Psoas muscle (tissue), 8 donors: ENCODE measurements at regions of chr5 and their contacts with region 1.

Region 1: DNA sequence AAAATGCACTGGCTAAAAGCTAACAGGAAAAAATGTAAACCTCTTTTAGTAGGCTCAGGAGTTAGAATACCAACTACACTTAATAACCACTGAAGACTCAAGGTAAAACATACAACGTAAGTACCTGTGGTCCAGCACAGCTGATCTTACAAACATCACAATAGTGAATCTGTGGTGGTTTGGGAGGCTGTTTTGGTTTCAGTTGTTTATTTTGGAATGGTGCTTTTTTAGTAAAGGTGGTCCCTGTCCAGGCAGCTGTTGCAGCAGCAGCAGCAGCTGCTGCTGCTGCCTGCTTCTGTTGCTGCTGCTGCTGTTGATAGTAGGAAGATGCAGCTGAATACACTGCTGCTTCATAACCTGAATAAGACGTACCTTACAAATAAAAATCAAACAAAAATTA is 37.9 kb downstream of the ZFR start:
- DNase-seq: no peak
- ATAC-seq: no peak
- H3K4me3 ChIP-seq: no peak overlapping the region
- H3K27ac ChIP-seq: no peak overlapping the region
- H3K4me1 ChIP-seq: no peaks in the 10 kb centered on the region
- H3K27me3 ChIP-seq: no peaks in the 10 kb centered on the region
- CTCF ChIP-seq: no peak

Region 2: DNA sequence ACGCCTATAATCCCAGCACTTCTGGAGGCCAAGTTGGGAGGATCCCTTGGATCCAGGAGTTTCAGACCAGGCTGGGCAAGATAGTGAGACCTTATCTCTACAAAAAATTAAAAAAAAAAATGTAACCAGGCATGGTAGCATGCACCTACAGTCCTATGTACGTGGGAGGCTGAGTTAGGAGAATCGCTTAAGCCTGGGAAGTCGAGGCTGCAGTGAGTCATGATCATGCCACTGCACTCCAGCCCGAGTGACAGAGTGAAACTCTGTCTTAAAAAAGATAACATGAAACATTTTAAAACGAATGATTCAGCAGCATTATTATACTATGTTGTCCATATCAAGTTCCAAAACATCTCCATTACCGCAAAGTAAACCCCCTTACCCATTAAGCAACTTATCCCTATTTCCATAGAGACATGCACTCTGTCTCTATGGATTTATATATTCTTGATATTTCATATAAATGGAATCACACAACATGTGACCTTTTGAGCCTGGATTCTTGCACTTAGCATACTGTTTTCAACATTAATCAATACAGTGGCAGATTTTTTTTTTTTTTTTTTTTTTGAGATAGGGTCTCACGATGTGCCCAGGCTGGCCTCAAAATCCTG is 37.0 kb before region 1 on chr5:
- intact Hi-C with region 1: no loop called
- DNase-seq: no peak
- ATAC-seq: no peak
- H3K4me3 ChIP-seq: no peak overlapping the region
- H3K27ac ChIP-seq: no peak overlapping the region
- H3K4me1 ChIP-seq: no peaks in the 10 kb centered on the region
- H3K27me3 ChIP-seq: no peaks in the 10 kb centered on the region
- CTCF ChIP-seq: no peak

Region 3: DNA sequence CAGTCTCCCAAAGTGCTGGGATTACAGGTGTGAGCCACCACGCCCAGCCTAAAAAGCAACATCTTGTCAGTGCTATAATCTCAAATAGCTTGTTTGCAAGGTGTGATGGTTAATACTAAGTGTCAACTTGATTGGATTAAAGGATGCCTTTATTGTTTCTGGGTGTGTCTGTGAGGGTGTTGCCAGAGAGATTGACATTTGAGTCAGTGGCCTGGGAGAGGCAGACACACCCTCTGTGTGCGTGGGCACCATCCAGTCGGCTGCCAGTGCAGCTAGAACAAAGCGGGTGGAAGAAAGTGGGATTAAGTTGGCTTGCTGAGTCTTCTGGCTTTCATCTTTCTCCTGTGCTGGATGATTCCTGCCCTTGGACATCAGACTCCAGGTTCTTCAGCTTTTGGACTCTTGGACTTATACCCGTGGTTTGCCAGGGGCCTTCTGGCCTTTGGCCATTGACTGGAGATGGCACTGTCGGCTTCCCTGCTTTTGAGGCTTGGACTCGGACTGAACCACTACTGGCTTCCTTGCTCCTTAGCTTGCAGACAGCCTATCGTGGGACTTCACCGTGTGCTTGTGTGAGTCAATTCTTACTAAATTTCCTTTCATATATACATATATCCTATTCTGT is 1062.3 kb after region 1 on chr5:
- intact Hi-C with region 1: loop called in 1 of 2 experiments (anchors 10 kb)
- DNase-seq: no peak
- ATAC-seq: no peak
- H3K4me3 ChIP-seq: no peak overlapping the region
- H3K27ac ChIP-seq: no peak overlapping the region
- H3K4me1 ChIP-seq: no peaks in the 10 kb centered on the region
- H3K27me3 ChIP-seq: no peaks in the 10 kb centered on the region
- CTCF ChIP-seq: no peak